ENCODE measurements at regions of chr6 and their contacts with region 1.

Region 1: DNA sequence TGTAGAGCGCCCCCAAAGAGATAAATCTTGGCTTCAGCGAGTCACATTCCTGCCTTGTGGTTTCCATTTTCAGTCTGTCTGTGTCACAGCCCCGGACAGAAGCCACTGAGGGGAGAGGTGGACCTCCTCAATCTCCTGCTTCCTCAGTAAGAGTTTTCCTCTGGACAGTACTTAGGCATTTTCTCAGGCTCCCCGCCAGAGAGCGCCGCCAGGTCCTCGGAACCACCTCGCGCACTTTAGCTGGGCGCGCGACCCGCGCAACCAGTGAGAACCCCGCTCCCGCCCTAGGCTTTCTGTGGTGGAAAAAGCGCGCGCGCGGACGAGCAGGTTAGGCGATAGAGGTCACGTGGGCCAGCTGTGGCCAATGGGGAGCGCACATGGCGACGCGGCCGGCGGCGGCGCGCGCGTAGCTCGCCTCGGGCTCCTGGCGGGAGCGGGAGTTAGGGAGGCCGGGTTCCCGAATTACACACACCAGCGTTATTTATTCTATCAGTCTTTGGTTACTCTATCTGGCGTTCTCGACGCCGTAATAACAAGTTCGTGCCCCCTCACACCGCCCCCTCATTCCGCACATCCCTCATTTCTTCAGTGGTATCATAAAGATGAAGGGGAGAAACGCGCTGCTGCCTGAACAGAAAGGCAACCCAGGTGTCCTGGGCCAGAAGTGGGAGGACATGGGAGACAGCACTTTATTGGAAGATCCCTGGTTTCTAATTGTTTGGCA is 19.4 kb downstream of the PXT1 start:
- DNase-seq: peak; percentile 99
- ATAC-seq: peak; percentile 99 to 100 (median 100)
- H3K4me3 ChIP-seq: peak overlapping the region; percentile 69
- H3K27ac ChIP-seq: peak overlapping the region; percentile 83
- H3K4me1 ChIP-seq: peaks cover 12% of the 10 kb centered on the region
- H3K27me3 ChIP-seq: no peaks in the 10 kb centered on the region
- CTCF ChIP-seq: peak; percentile 59

Region 2: GRCh38 chr6:36546920-36547645 is 123.8 kb after region 1 on chr6 and contains the start of gene STK38:
- intact Hi-C with region 1: loop called in 1 of 2 experiments (anchors 10 kb)
- DNase-seq: peak; percentile 90 to 97
- ATAC-seq: peak; percentile 96 to 98 (median 98)
- H3K4me3 ChIP-seq: peak within 1 kb of the TSS; percentile 99
- H3K27ac ChIP-seq: peak within 1 kb of the TSS; percentile 94
- H3K4me1 ChIP-seq: peaks cover 18% of the 10 kb centered on the region
- H3K27me3 ChIP-seq: no peaks in the 10 kb centered on the region
- CTCF ChIP-seq: no peak
- total RNA-seq, gene STK38: 7.7 to 13.6 (median 12.6) TPM

Region 3: GRCh38 chr6:36759148-36759759 is 336.0 kb after region 1 on chr6:
- intact Hi-C with region 1: loop called in 1 of 2 experiments (anchors 10 kb)
- DNase-seq: peak; percentile 79 to 91
- ATAC-seq: peak; percentile 88 to 98 (median 95)
- H3K4me3 ChIP-seq: no peak overlapping the region
- H3K27ac ChIP-seq: no peak overlapping the region
- H3K4me1 ChIP-seq: peaks cover 5% of the 10 kb centered on the region
- H3K27me3 ChIP-seq: no peaks in the 10 kb centered on the region
- CTCF ChIP-seq: peak; percentile 95

Measured in psoas muscle (tissue), 8 donors.